ENCODE measurements at regions of chr9 and their contacts with region 1.

Region 1: DNA sequence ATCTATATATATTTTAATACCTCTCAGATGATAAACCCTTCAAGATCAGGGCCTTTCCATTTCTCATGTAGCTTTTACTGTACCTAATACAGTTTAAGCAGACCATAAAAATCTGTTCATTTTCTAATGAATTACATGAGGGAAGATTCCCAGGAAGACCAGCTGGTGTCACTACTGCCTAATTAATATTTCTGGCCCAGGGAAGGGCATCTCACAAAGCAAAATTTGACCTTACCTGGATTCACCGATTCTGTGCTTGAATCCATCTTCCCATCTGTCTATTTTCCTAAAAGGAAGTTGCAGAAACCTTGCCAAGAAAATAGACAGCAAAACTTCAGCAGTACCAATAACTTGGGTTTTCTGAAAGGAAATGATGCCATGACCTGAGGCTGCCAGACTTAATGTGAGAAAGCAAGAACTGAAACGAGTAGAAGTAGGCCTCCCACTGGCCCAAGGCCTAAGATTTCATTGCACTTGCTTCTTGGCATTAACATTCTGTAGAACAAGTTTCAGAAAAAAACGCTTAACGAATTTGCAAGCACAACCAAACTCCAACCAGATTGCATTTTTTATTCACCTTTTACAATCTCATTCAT is 83.0 kb upstream of the GLIS3 start:
- DNase-seq: peak; percentile 4
- H3K4me3 Mint-ChIP-seq: no peak overlapping the region
- H3K27ac Mint-ChIP-seq: no peak overlapping the region
- H3K4me1 Mint-ChIP-seq: no peaks in the 10 kb centered on the region
- H3K27me3 Mint-ChIP-seq: no peaks in the 10 kb centered on the region
- CTCF ChIP-seq: peak; percentile 29

Region 2: GRCh38 chr9:4422495-4422894 is 39.7 kb after region 1 on chr9:
- CTCF ChIA-PET with region 1: no interaction called
- intact Hi-C with region 1: no loop called
- DNase-seq: peak; percentile 4
- H3K4me3 Mint-ChIP-seq: no peak overlapping the region
- H3K27ac Mint-ChIP-seq: no peak overlapping the region
- H3K4me1 Mint-ChIP-seq: peaks cover 15% of the 10 kb centered on the region
- H3K27me3 Mint-ChIP-seq: no peaks in the 10 kb centered on the region
- CTCF ChIP-seq: no peak

Region 3: GRCh38 chr9:4489919-4490704 is 107.3 kb after region 1 on chr9 and contains the start of gene SLC1A1:
- CTCF ChIA-PET with region 1: no interaction called
- intact Hi-C with region 1: loop called (anchors 5 kb)
- DNase-seq: peak; percentile 77
- H3K4me3 Mint-ChIP-seq: peak within 1 kb of the TSS; percentile 86
- H3K27ac Mint-ChIP-seq: peak within 1 kb of the TSS; percentile 92
- H3K4me1 Mint-ChIP-seq: peaks cover 41% of the 10 kb centered on the region
- H3K27me3 Mint-ChIP-seq: no peaks in the 10 kb centered on the region
- CTCF ChIP-seq: no peak
- total RNA-seq, gene SLC1A1: 71.6 and 81.4 TPM in 2 replicates

Region 4: GRCh38 chr9:4548811-4549725 is 166.2 kb after region 1 on chr9:
- CTCF ChIA-PET with region 1: interaction called, 3 read pairs
- intact Hi-C with region 1: loop called (anchors 10 kb)
- DNase-seq: peak; percentile 21
- H3K4me3 Mint-ChIP-seq: no peak overlapping the region
- H3K27ac Mint-ChIP-seq: no peak overlapping the region
- H3K4me1 Mint-ChIP-seq: peaks cover 10% of the 10 kb centered on the region
- H3K27me3 Mint-ChIP-seq: no peaks in the 10 kb centered on the region
- CTCF ChIP-seq: no peak

Region 5: GRCh38 chr9:4640027-4640426 is 257.2 kb after region 1 on chr9:
- CTCF ChIA-PET with region 1: interaction called, 6 read pairs
- intact Hi-C with region 1: loop called (anchors 2 kb)
- DNase-seq: peak; percentile 48
- H3K4me3 Mint-ChIP-seq: no peak overlapping the region
- H3K27ac Mint-ChIP-seq: no peak overlapping the region
- H3K4me1 Mint-ChIP-seq: no peaks in the 10 kb centered on the region
- H3K27me3 Mint-ChIP-seq: no peaks in the 10 kb centered on the region
- CTCF ChIP-seq: peak; percentile 35

Measured in Calu3 (cell line).